OCI-LY7 (cell line): ENCODE measurements at regions of chr2 and their contacts with region 1.

Region 1: DNA sequence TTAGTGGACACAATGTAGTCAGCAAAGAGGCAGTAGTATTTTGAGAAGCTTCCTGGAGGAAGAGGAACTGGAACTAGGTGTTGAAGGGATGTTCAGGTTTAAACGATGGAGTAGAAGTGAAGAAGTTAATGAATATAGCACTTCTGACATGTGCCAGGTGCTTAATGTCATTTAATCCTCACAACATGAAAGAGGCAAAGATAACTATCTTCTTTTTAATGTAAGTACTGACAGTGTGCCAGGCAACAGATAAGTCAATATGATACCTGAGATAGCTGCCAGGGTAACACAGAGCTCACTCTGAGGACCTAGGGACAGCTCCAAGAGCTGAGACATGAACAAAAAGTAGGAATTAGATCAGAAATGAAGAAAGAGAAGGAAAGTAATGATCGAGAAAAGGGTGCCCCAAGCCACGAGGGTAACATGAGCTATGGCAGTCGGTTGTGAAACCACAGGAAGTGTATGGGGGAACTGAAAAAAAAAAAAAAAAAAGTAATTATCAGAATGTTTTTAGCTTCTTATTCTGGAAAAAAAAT is 140.7 kb downstream of the RNF144A start:
- DNase-seq: peak; percentile 74
- H3K4me3 ChIP-seq: peak overlapping the region; percentile 57
- H3K27ac ChIP-seq: peak overlapping the region; percentile 94
- H3K4me1 ChIP-seq: peaks cover 84% of the 10 kb centered on the region
- CTCF ChIP-seq: no peak

Region 2: GRCh38 chr2:6290628-6291027 is 767.3 kb before region 1 on chr2:
- CTCF ChIA-PET with region 1: no interaction called
- POLR2A ChIA-PET with region 1: no interaction called
- intact Hi-C with region 1: no loop called
- DNase-seq: no peak
- H3K4me3 ChIP-seq: no peak overlapping the region
- H3K27ac ChIP-seq: no peak overlapping the region
- H3K4me1 ChIP-seq: no peaks in the 10 kb centered on the region
- CTCF ChIP-seq: no peak

Region 3: GRCh38 chr2:6934758-6935651 is 122.9 kb before region 1 on chr2:
- CTCF ChIA-PET with region 1: no interaction called
- POLR2A ChIA-PET with region 1: no interaction called
- intact Hi-C with region 1: no loop called
- DNase-seq: no peak
- H3K4me3 ChIP-seq: no peak overlapping the region
- H3K27ac ChIP-seq: no peak overlapping the region
- H3K4me1 ChIP-seq: no peaks in the 10 kb centered on the region
- CTCF ChIP-seq: no peak

Region 4: DNA sequence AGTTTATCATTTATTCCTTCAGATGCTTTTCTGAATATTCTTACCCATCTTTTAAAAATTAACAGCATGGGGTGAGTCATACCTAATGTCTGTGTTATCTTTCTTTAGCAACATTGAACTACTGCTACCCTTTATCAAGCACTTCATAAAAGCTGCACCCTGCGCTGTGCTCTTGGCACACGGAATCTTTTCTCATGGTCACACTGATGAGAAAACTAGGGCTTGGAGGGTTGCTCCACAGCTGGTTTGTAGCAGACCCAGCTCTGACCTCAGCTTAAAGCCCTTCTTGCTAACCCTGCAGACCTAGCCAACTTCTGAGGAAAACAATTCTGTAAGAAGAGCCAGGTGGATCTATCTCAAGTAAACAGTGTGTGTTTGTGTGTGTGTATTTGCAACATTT is 34.4 kb before region 1 on chr2:
- CTCF ChIA-PET with region 1: no interaction called
- POLR2A ChIA-PET with region 1: no interaction called
- intact Hi-C with region 1: no loop called
- DNase-seq: no peak
- H3K4me3 ChIP-seq: no peak overlapping the region
- H3K27ac ChIP-seq: no peak overlapping the region
- H3K4me1 ChIP-seq: no peaks in the 10 kb centered on the region
- CTCF ChIP-seq: no peak

Region 5: GRCh38 chr2:7044261-7045250 is 13.4 kb before region 1 on chr2:
- CTCF ChIA-PET with region 1: interaction called, 12 read pairs
- POLR2A ChIA-PET with region 1: interaction called, 41 read pairs
- intact Hi-C with region 1: no loop called
- DNase-seq: peak; percentile 59
- H3K4me3 ChIP-seq: no peak overlapping the region
- H3K27ac ChIP-seq: no peak overlapping the region
- H3K4me1 ChIP-seq: no peaks in the 10 kb centered on the region
- CTCF ChIP-seq: peak; percentile 92

Region 6: GRCh38 chr2:7071916-7072556 is 14.1 kb after region 1 on chr2:
- CTCF ChIA-PET with region 1: interaction called, 4 read pairs
- POLR2A ChIA-PET with region 1: interaction called, 26 read pairs
- intact Hi-C with region 1: no loop called
- DNase-seq: peak; percentile 52
- H3K4me3 ChIP-seq: no peak overlapping the region
- H3K27ac ChIP-seq: no peak overlapping the region
- H3K4me1 ChIP-seq: peaks cover 19% of the 10 kb centered on the region
- CTCF ChIP-seq: no peak